Activated T-helper 1 cell treated with anti-CD3 and anti-CD28 coated beads, Interleukin-12 subunit alpha, Interleukin-12 subunit beta, Interleukin-2, Interleukin-4 antibody, amounts not matched to agents 30 ng/mL and 10 ng/mL and 1 ng/mL, durations not matched to agents 14 hours and 24 hours and 36 hours (primary cell): ENCODE measurements at regions of chr17 and their contacts with region 1.

Region 1: GRCh38 chr17:45247429-45248131 is 14.3 kb downstream of the SPATA32 start:
- DNase-seq: peak; percentile 92
- H3K4me3 Mint-ChIP-seq: peak overlapping the region; percentile 88
- H3K27ac Mint-ChIP-seq: peak overlapping the region; percentile 93
- H3K4me1 Mint-ChIP-seq: peaks cover 51% of the 10 kb centered on the region
- H3K27me3 Mint-ChIP-seq: no peaks in the 10 kb centered on the region

Region 2: DNA sequence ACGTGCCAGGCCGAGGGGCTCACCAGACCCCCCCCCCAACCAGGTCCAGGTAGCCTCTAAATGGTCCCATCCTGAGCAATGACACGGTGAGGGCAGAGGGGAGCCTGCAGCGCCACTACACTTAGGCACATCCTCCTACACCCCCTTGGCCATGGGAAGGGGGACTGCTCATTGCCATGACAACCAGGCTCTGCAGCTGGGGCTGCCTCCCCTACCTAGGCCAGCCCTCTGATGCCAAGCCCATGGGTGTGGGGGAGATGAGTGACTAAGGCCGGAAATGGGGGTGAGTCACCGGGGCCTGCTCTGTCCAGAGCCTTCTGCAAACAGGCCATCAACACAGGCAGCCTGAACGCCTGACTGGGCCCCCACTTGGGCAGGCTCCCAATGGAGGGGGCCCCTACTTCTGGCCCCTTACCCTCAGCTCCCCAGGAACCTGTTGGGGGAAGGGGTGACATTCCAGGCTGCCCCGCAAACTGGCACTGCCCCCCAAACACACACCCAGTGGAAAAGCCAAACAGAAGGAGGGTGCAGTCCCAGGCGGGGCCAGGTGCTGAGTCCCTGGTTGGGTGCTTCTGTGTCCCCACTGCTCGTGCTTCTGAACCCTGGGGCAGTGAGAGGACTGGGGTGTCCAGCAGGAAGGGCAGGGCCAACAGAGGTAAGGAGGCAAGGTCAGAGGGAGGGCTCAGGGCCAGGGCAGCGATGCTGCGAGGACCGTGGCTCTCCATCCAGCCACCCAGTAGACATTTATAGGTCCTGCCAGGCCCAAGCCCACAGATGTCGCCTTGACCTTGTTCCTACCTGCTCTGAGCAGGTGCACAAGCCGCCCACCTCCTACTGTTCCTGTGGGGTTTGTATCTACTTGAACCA is 123.4 kb before region 1 on chr17:
- intact Hi-C with region 1: no loop called
- DNase-seq: no peak
- H3K4me3 Mint-ChIP-seq: no peak overlapping the region
- H3K27ac Mint-ChIP-seq: no peak overlapping the region
- H3K4me1 Mint-ChIP-seq: no peaks in the 10 kb centered on the region
- H3K27me3 Mint-ChIP-seq: peaks cover 17% of the 10 kb centered on the region

Region 3: DNA sequence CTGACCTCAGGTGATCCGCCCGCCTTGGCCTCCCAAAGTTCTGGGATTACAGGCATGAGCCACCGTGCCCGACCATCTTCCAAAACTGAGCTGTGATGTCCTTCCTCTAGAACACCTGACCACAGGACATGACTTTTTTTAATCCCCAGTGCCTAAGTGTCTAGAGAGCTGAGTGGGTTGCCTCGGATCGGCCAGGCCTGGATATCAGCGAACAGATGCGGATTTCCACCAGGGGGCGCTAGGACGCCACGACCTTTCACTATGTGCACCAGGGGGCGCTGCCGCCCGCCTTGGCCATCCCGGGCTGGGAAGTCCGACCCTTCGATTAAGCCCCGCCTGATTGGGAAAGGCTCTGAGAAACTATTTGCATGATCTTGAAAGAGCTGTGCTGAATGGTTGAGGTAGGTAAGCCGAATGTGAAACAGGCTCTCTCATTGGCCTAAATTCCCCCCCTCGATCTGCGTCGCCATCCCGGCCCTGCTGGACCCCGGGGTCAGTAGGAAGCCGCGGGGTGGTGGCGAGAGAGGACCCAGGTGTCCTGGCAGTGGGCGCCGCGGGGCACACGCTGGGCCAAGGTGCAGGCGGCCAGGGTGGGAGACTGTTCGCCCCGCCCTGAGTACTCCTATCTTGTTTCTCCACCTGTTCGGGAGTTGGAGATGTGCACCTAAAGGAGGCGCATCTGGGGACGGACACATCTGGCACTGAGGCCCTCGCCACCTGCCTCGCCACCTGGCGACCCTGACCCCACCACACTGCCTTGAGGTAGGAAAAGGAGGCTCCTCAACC is 112.2 kb before region 1 on chr17 and contains the start of gene ACBD4:
- intact Hi-C with region 1: loop called (anchors 1 kb)
- DNase-seq: peak; percentile 96
- H3K4me3 Mint-ChIP-seq: peak within 1 kb of the TSS; percentile 87
- H3K27ac Mint-ChIP-seq: peak within 1 kb of the TSS; percentile 68
- H3K4me1 Mint-ChIP-seq: peaks cover 15% of the 10 kb centered on the region
- H3K27me3 Mint-ChIP-seq: peaks cover 6% of the 10 kb centered on the region
- total RNA-seq, gene ACBD4: 11.3 and 12.5 TPM in 2 replicates

Region 4: GRCh38 chr17:45161019-45161825 is 86.4 kb before region 1 on chr17:
- intact Hi-C with region 1: loop called (anchors 1 kb)
- DNase-seq: peak; percentile 98
- H3K4me3 Mint-ChIP-seq: peak overlapping the region; percentile 98
- H3K27ac Mint-ChIP-seq: peak overlapping the region; percentile 98
- H3K4me1 Mint-ChIP-seq: peaks cover 32% of the 10 kb centered on the region
- H3K27me3 Mint-ChIP-seq: no peaks in the 10 kb centered on the region

Region 5: DNA sequence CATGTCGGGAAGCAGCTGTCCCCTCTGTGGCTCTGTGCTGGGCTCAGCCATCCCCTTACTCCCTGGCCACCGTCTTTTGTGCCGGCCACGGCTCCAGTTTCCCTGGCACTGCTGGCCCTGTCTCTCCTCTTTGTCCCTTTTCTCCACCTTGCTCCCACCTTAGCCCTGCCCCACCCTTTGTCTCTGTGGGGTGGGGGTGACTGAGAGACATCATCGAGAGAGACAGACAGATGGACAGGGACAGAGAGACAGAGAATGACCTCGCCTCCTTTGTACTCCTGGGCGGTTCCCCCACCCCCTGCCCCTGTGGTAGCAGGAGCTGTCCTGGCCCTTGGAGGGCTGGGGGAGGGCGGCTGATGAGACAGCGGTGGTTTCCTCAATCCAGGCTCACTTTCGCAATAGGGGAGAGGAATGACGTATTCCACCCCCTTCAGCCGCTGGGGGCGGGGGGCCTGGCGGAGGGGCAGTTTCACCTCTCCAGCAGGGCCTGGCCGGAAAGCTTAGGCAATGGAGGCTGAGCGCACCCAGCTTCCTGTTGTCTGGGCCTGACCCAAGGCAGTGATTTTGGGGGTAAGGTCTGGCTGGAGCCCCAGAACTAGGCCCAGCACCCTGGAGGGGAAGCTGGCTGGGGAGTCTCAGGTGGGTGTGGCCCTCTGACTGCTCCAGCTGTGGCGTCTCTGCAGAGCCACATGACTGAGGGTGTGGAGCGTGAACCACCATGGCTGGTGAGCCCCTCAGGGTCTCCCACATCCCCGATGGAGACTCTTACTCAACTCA is 18.6 kb before region 1 on chr17:
- intact Hi-C with region 1: loop called (anchors 1 kb)
- DNase-seq: peak; percentile 81
- H3K4me3 Mint-ChIP-seq: peak overlapping the region; percentile 99
- H3K27ac Mint-ChIP-seq: peak overlapping the region; percentile 97
- H3K4me1 Mint-ChIP-seq: peaks cover 94% of the 10 kb centered on the region
- H3K27me3 Mint-ChIP-seq: no peaks in the 10 kb centered on the region

Region 6: DNA sequence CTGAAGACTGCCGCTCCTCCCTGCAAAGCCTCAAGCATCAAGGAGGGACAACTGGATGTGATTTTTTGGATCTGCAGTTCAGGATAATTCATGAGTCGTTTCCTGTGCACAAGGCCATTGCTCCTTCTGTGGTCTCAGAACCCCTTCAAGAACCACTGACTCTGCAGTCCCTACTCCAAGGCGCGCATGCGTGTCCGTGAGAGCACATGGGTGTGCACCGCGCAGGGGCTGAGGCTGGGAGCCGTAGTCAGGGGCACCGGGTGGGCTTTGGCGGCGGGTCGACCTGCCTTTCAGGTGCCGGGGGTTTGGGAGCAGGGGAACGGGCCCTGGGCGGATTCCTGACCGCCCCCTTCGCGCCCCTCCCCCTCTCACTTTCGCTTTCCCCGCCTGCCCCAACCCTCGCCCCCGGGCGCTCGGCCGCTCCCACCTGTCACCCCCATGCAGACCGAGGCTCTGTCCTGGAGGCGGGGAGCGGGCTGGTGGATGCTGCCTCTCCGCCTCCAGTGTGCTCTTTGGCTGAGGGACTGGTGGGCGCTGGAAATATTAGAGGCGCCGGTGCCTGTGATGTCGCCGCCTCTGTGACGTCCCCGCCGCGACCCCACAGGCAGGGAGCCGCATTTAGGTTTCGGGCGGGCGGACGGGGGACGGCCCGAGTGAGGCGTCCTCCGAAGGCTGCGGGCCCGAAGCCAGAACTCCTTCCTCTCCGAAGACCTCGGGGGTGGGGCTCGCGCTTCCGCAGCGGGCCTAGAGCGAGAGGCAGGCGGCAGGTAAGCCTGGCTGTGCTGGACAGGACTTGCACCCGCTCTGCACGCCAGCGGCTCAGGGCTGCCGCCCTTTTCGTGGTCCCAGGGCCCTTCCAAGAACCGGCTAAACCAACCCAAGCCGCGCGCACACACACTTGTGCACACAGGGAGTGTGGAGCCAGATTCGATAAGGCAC is 14.3 kb after region 1 on chr17 and contains the start of gene SPATA32:
- intact Hi-C with region 1: loop called (anchors 1 kb)
- DNase-seq: peak; percentile 49
- H3K4me3 Mint-ChIP-seq: peak within 1 kb of the TSS; percentile 73
- H3K27ac Mint-ChIP-seq: peak within 1 kb of the TSS; percentile 73
- H3K4me1 Mint-ChIP-seq: peaks cover 24% of the 10 kb centered on the region
- H3K27me3 Mint-ChIP-seq: no peaks in the 10 kb centered on the region
- total RNA-seq, gene SPATA32: 0.44 and 0.56 TPM in 2 replicates

Region 7: DNA sequence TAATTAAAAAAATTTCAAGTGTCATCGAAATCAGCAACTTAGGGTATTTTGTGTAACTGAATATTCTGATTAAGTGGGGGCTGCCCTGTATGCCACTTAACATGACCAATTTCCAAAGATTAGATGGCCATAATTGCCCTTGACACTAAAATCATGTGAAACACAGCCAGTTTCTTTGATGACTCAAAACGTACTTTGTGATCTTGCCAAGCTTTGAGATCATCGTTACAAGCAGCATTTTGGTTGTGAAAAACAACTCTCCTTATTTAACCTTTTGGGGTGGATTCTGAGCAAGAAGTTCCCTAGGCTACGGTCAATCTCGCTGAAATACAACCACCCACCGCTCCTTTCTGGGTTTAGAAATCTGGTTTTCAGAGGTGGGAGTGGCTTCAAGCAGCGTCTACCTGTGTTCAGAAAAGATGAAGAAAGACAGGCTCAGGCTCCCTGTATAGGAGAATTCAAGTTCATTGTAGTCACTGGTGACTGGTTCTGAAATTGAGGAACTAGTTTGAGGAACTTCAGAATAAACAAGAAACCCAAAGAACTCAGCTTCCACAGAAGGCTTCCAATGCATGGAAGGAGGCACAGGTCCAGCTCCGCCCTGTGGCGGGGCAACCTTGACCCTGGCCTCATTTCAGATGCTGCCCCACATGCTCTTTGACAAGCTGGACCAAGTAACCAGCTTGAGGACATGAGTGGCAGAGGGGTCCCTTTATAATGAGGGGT is 59.9 kb after region 1 on chr17:
- intact Hi-C with region 1: loop called (anchors 2 kb)
- DNase-seq: peak; percentile 67
- H3K4me3 Mint-ChIP-seq: peak overlapping the region; percentile 47
- H3K27ac Mint-ChIP-seq: peak overlapping the region; percentile 89
- H3K4me1 Mint-ChIP-seq: peaks cover 88% of the 10 kb centered on the region
- H3K27me3 Mint-ChIP-seq: no peaks in the 10 kb centered on the region